ENCODE measurements at regions of chr5 and their contacts with region 1.

Region 1: GRCh38 chr5:42583322-42583721 is 160.1 kb downstream of the GHR start:
- DNase-seq: peak; percentile 31
- H3K4me3 Mint-ChIP-seq: no peak overlapping the region
- H3K27ac Mint-ChIP-seq: no peak overlapping the region
- H3K4me1 Mint-ChIP-seq: peaks cover 2% of the 10 kb centered on the region
- H3K27me3 Mint-ChIP-seq: peaks cover 13% of the 10 kb centered on the region

Region 2: GRCh38 chr5:42423285-42424165 is 159.8 kb before region 1 on chr5 and contains the start of gene GHR:
- CTCF ChIA-PET with region 1: interaction called, 9 read pairs
- POLR2A ChIA-PET with region 1: no interaction called
- intact Hi-C with region 1: loop called (anchors 5 kb)
- DNase-seq: peak; percentile 33
- H3K4me3 Mint-ChIP-seq: no peak within 1 kb of the TSS
- H3K27ac Mint-ChIP-seq: no peak within 1 kb of the TSS
- H3K4me1 Mint-ChIP-seq: no peaks in the 10 kb centered on the region
- H3K27me3 Mint-ChIP-seq: peaks cover 19% of the 10 kb centered on the region
- total RNA-seq, gene GHR: not detected

Measured in activated CD4-positive, alpha-beta memory T cell treated with anti-CD3 and anti-CD28 coated beads for 36 hours (primary cell).